Adrenal gland (tissue), 19 donors: ENCODE measurements at regions of chr1 and their contacts with region 1.

Region 1: GRCh38 chr1:152440635-152441471 is 26.8 kb upstream of the CRNN start:
- DNase-seq: peak; percentile 59 to 84 (median 78)
- H3K4me3 ChIP-seq: no peak overlapping the region
- H3K27ac ChIP-seq: no peak overlapping the region
- H3K4me1 ChIP-seq: no peaks in the 10 kb centered on the region
- H3K27me3 ChIP-seq: peaks cover 5% of the 10 kb centered on the region
- CTCF ChIP-seq: peak; percentile 62 to 78 (median 74)
- POLR2A ChIP-seq: no peak

Region 2: GRCh38 chr1:152052606-152053005 is 388.2 kb before region 1 on chr1:
- intact Hi-C with region 1: loop called in 1 of 2 experiments (anchors 10 kb)
- DNase-seq: peak; percentile 78 to 95 (median 86)
- H3K4me3 ChIP-seq: no peak overlapping the region
- H3K27ac ChIP-seq: no peak overlapping the region
- H3K4me1 ChIP-seq: peaks cover 10 to 13% of the 10 kb centered on the region in 2 donors
- H3K27me3 ChIP-seq: peaks cover 15% of the 10 kb centered on the region
- CTCF ChIP-seq: peak; percentile 78 to 94 (median 90)
- POLR2A ChIP-seq: no peak